Activated CD4-positive, alpha-beta memory T cell treated with anti-CD3 and anti-CD28 coated beads, Interleukin-2, amount 10 ng/mL, durations not matched to agents 7 days and 5 days (primary cell): ENCODE measurements at regions of chr19 and their contacts with region 1.

Region 1: GRCh38 chr19:32971715-32972540 is at the starts of genes CEP89 and FAAP24:
- DNase-seq: peak; percentile 99
- H3K4me3 Mint-ChIP-seq: peak within 1 kb of the TSS; percentile 96
- H3K27ac Mint-ChIP-seq: peak within 1 kb of the TSS; percentile 82
- H3K4me1 Mint-ChIP-seq: peaks cover 31% of the 10 kb centered on the region
- H3K27me3 Mint-ChIP-seq: no peaks in the 10 kb centered on the region
- total RNA-seq, gene CEP89: 18.1 to 19.8 TPM
- total RNA-seq, gene FAAP24: 5.3 to 7.6 TPM

Region 2: GRCh38 chr19:32819419-32820400 is 152.2 kb before region 1 on chr19:
- CTCF ChIA-PET with region 1: no interaction called
- POLR2A ChIA-PET with region 1: no interaction called
- DNase-seq: no peak
- H3K4me3 Mint-ChIP-seq: no peak overlapping the region
- H3K27ac Mint-ChIP-seq: no peak overlapping the region
- H3K4me1 Mint-ChIP-seq: no peaks in the 10 kb centered on the region
- H3K27me3 Mint-ChIP-seq: peaks cover 2% of the 10 kb centered on the region

Region 3: DNA sequence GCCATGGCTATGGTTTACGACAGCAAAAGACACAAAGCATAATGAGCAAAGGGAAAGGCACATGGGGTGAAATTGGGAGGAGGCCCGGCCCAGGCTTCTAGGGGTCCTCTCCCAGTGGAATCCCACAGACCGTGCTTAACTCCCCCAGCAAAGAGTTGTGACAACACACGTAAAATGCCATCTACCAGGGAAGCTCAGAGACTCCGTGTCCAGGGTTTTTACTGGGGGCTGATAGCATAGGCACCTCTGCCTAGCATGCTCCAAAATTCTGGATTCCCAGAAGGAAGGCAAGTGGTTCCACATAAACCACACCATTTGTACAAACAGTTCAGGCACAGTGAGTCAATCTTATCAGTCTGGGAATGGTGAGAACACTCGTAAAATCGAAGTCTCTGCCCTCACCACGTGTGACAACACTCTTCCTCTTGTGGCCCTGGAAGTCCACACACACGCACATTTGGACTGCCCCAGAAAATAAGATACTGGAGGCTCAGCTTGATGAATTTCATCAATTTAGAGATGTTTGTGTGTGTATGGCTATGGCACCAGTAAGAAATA is 57.9 kb after region 1 on chr19:
- CTCF ChIA-PET with region 1: no interaction called
- POLR2A ChIA-PET with region 1: no interaction called
- DNase-seq: no peak
- H3K4me3 Mint-ChIP-seq: no peak overlapping the region
- H3K27ac Mint-ChIP-seq: no peak overlapping the region
- H3K4me1 Mint-ChIP-seq: no peaks in the 10 kb centered on the region
- H3K27me3 Mint-ChIP-seq: no peaks in the 10 kb centered on the region

Region 4: GRCh38 chr19:33125929-33126388 is 154.0 kb after region 1 on chr19:
- CTCF ChIA-PET with region 1: interaction called, 13 read pairs
- POLR2A ChIA-PET with region 1: interaction called, 4 read pairs
- DNase-seq: peak; percentile 60
- H3K4me3 Mint-ChIP-seq: no peak overlapping the region
- H3K27ac Mint-ChIP-seq: no peak overlapping the region
- H3K4me1 Mint-ChIP-seq: peaks cover 5% of the 10 kb centered on the region
- H3K27me3 Mint-ChIP-seq: no peaks in the 10 kb centered on the region